Heart right ventricle (tissue), 16 donors: ENCODE measurements at regions of chr20 and their contacts with region 1.

Region 1: DNA sequence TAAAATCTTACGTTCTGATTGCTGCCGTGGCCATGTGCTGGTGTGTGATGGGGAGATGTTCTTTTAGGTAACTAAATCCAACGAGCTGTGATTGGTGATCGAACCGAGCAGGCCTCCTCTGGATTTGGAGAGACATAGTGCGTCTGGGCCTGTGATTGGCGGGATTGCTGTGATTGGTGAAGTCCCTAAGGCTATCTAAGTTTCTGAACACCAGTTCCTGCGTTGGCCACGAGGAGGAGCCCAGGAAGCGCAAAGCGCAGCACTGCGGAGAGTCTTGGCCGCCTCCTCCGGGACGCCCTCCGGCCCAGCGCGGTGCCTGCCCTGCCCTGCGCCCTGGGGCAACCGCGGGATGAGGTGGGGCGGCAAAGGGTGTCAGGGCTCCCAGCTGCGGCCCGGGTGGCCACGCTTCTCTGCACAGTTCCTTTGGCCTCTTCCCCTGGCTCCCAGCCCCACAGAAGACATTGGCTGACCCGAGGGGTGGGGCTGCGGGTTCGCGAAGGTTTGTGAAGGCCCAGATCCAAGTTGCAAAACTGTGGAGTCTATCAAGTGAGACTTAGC is 33.0 kb downstream of the HNF4A start:
- DNase-seq: peak; percentile 33 to 68
- ATAC-seq: peak in 7 of 8 donors; percentile 50 to 80 (median 70)
- H3K4me3 ChIP-seq: no peak overlapping the region
- H3K27ac ChIP-seq: no peak overlapping the region
- H3K4me1 ChIP-seq: peaks cover 0 to 6% (median 0%) of the 10 kb centered on the region in 9 donors
- H3K27me3 ChIP-seq: peaks cover 0 to 27% (median 18%) of the 10 kb centered on the region in 7 donors
- CTCF ChIP-seq: peak; percentile 35 to 80 (median 64)

Region 2: DNA sequence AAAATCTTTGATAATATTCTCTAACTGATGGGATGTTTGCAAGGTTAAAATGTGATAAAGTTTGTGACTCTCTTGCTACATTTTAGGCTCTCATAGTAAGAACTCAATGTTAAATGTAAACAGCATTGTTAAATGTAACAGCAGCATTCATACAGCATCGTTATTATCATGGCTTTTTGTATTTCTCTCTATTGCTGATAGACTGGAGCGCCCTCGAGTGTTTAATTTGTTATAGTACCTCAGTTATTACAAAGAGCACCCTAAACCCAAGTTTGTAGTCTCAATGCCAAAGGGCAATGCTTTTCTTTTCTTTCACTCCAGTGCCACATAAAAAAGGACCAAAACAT is 72.2 kb after region 1 on chr20:
- intact Hi-C with region 1: loop called in 6 of 10 experiments (anchors 5 kb)
- DNase-seq: no peak
- ATAC-seq: peak in 1 of 8 donors; percentile 42
- H3K4me3 ChIP-seq: no peak overlapping the region
- H3K27ac ChIP-seq: no peak overlapping the region
- H3K4me1 ChIP-seq: no peaks in the 10 kb centered on the region
- H3K27me3 ChIP-seq: no peaks in the 10 kb centered on the region
- CTCF ChIP-seq: peak in 8 of 9 donors; percentile 7 to 60 (median 42)

Region 3: DNA sequence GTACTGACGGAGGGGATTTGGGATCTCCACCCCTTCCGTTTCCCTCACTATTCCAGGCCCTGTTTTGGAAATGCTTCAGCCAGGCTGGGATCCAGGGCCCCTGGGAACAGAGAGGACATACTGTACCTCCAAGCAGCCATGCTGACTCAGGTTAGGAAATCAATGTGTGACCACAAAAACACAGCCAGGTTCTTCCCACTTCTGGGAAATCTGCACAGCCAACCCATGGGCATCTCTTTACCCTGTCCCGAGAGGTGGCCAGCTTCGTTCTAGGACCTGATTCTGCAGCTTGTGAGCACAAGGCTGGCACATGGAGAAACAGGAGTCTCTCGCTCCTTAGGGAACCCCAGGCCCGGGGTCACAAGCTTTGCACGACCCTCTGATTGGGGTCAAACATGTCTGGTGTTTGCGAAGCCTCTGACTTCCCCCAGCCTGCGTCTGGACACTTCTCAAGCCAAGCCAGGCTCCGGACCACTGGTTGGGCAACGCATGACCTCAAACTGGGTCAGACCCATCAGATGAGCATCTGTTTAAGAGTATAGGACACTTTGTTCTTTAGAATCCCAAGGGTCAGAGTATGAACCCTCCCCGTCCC is 78.8 kb after region 1 on chr20:
- intact Hi-C with region 1: loop called in 3 of 10 experiments (anchors 5 kb)
- DNase-seq: peak in 1 of 2 donors; percentile 46
- ATAC-seq: peak in 5 of 8 donors; percentile 23 to 88 (median 71)
- H3K4me3 ChIP-seq: no peak overlapping the region
- H3K27ac ChIP-seq: no peak overlapping the region
- H3K4me1 ChIP-seq: peaks cover 0 to 7% (median 0%) of the 10 kb centered on the region in 9 donors
- H3K27me3 ChIP-seq: no peaks in the 10 kb centered on the region
- CTCF ChIP-seq: no peak

Region 4: DNA sequence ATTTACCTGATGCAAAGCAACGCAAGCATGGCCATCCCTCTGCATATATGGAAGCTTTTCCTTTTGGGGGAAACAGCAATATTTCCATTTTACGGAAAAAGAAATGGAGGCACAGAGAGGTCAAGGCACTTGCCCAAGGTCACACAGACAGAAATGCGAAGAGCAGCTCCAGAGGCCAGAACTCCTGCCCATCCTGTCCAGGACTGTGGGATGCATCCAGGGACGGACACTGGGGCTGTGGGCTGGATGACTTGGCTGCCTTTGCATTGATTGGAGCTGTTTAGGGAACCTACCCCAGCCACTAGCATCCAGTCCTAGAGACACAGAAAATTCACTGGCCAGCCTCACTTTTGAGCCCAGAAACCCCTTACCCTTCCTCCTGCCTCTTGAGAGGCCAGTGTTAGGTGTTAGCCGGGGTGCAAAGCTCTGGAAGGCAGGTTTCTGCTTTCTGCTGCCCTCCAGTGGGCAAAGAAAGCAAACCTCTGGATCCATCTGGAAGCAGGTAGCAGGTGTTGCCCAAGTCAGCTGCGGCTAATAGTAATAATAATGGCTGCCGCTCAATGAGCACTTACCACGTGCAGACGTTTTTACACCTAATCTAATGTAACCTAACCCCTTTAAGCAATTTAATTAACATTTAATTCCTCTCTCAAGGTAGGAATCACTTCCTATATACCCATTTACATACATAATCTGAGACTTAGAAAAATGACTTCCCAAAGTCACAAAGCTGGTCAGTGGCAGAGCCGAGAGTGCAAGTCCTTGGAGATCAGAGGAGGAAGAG is 294.9 kb after region 1 on chr20:
- intact Hi-C with region 1: loop called in 3 of 10 experiments (anchors 5 to 10 kb)
- DNase-seq: no peak
- ATAC-seq: peak in 7 of 8 donors; percentile 43 to 75 (median 54)
- H3K4me3 ChIP-seq: no peak overlapping the region
- H3K27ac ChIP-seq: no peak overlapping the region
- H3K4me1 ChIP-seq: peaks cover 0 to 14% (median 6%) of the 10 kb centered on the region in 9 donors
- H3K27me3 ChIP-seq: peaks cover 0 to 4% (median 0%) of the 10 kb centered on the region in 7 donors
- CTCF ChIP-seq: peak in 8 of 9 donors; percentile 46 to 75 (median 56)